ENCODE measurements at regions of chr17 and their contacts with region 1.

Region 1: GRCh38 chr17:1399679-1400512 is at the start of gene YWHAE:
- DNase-seq: peak; percentile 96
- H3K4me3 Mint-ChIP-seq: peak within 1 kb of the TSS; percentile 100
- H3K27ac Mint-ChIP-seq: peak within 1 kb of the TSS; percentile 99
- H3K4me1 Mint-ChIP-seq: peaks cover 26% of the 10 kb centered on the region
- H3K27me3 Mint-ChIP-seq: no peaks in the 10 kb centered on the region
- total RNA-seq, gene YWHAE: 340 to 435 TPM

Region 2: GRCh38 chr17:1365445-1366039 is 34.4 kb before region 1 on chr17:
- CTCF ChIA-PET with region 1: interaction called, 14 read pairs
- POLR2A ChIA-PET with region 1: no interaction called
- DNase-seq: peak; percentile 76
- H3K4me3 Mint-ChIP-seq: no peak overlapping the region
- H3K27ac Mint-ChIP-seq: peak overlapping the region; percentile 36
- H3K4me1 Mint-ChIP-seq: peaks cover 64% of the 10 kb centered on the region
- H3K27me3 Mint-ChIP-seq: no peaks in the 10 kb centered on the region

Region 3: GRCh38 chr17:1882836-1883235 is 482.9 kb after region 1 on chr17:
- CTCF ChIA-PET with region 1: no interaction called
- POLR2A ChIA-PET with region 1: interaction called, 10 read pairs
- DNase-seq: peak; percentile 40
- H3K4me3 Mint-ChIP-seq: no peak overlapping the region
- H3K27ac Mint-ChIP-seq: no peak overlapping the region
- H3K4me1 Mint-ChIP-seq: peaks cover 8% of the 10 kb centered on the region
- H3K27me3 Mint-ChIP-seq: no peaks in the 10 kb centered on the region

Measured in activated CD4-positive, alpha-beta T cell treated with anti-CD3 and anti-CD28 coated beads, Interleukin-2, amount 10 ng/mL, durations not matched to agents 7 days and 5 days (primary cell).